T-cell (primary cell): ENCODE measurements at regions of chr6 and their contacts with region 1.

Region 1: GRCh38 chr6:141946502-141946901 is 186.2 kb upstream of the GJE1 start:
- DNase-seq: no peak
- ATAC-seq: no peak
- H3K4me3 ChIP-seq: no peak overlapping the region
- H3K4me3 Mint-ChIP-seq: no peak overlapping the region
- H3K27ac ChIP-seq: no peak overlapping the region
- H3K27ac Mint-ChIP-seq: no peak overlapping the region
- H3K4me1 ChIP-seq: no peaks in the 10 kb centered on the region
- H3K4me1 Mint-ChIP-seq: no peaks in the 10 kb centered on the region
- H3K27me3 ChIP-seq: no peaks in the 10 kb centered on the region
- H3K27me3 Mint-ChIP-seq: no peaks in the 10 kb centered on the region

Region 2: GRCh38 chr6:140921366-140922226 is 1024.9 kb before region 1 on chr6:
- CTCF ChIA-PET with region 1: no interaction called
- POLR2A ChIA-PET with region 1: interaction called in 1 of 2 experiments, 10 read pairs
- DNase-seq: peak in 1 of 35 experiments; percentile 2
- ATAC-seq: peak in 1 of 4 experiments; percentile 19
- H3K4me3 ChIP-seq: no peak overlapping the region
- H3K4me3 Mint-ChIP-seq: no peak overlapping the region
- H3K27ac ChIP-seq: no peak overlapping the region
- H3K27ac Mint-ChIP-seq: no peak overlapping the region
- H3K4me1 ChIP-seq: no peaks in the 10 kb centered on the region
- H3K4me1 Mint-ChIP-seq: no peaks in the 10 kb centered on the region
- H3K27me3 ChIP-seq: no peaks in the 10 kb centered on the region
- H3K27me3 Mint-ChIP-seq: peaks cover 0 to 1% of the 10 kb centered on the region in 2 donors

Region 3: DNA sequence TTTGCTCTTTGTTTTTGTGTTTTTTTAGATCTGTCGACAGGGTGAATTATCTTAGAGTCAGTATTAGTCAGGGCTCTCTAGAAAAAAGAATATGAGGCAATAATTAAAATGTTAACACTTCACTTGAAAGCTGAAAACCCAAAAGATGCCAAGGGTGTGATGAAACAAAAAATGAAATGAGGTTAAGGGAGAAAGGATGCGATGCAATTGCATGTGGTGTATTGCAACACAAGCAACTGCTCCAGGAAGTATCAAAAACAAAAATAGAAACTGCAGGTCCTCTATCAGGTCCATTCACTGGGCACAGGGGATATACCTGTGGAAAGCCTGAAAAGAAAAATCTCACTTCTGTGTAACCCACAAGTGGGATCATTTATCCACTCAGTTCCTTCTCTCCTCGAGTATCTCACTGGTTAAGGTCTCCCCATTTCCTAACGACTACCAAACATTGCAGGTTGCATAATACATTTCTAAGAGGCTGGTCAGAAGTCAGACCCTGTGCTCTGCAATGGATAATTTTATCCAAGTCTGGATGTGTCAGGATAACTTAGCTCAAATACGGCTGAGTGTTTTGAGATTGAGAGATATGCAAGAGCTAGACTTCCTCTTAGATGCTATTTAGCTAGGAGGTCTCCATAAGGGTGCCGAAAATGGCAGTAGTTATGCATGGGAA is 71.4 kb before region 1 on chr6:
- CTCF ChIA-PET with region 1: no interaction called
- POLR2A ChIA-PET with region 1: no interaction called
- DNase-seq: no peak
- ATAC-seq: no peak
- H3K4me3 ChIP-seq: no peak overlapping the region
- H3K4me3 Mint-ChIP-seq: no peak overlapping the region
- H3K27ac ChIP-seq: no peak overlapping the region
- H3K27ac Mint-ChIP-seq: no peak overlapping the region
- H3K4me1 ChIP-seq: no peaks in the 10 kb centered on the region
- H3K4me1 Mint-ChIP-seq: no peaks in the 10 kb centered on the region
- H3K27me3 ChIP-seq: no peaks in the 10 kb centered on the region
- H3K27me3 Mint-ChIP-seq: no peaks in the 10 kb centered on the region